ENCODE measurements at regions of chr9 and their contacts with region 1.

Region 1: GRCh38 chr9:17793713-17794622 is 215.1 kb downstream of the SH3GL2 start:
- DNase-seq: peak in 3 of 10 donors; percentile 41 to 83 (median 74)

Region 2: DNA sequence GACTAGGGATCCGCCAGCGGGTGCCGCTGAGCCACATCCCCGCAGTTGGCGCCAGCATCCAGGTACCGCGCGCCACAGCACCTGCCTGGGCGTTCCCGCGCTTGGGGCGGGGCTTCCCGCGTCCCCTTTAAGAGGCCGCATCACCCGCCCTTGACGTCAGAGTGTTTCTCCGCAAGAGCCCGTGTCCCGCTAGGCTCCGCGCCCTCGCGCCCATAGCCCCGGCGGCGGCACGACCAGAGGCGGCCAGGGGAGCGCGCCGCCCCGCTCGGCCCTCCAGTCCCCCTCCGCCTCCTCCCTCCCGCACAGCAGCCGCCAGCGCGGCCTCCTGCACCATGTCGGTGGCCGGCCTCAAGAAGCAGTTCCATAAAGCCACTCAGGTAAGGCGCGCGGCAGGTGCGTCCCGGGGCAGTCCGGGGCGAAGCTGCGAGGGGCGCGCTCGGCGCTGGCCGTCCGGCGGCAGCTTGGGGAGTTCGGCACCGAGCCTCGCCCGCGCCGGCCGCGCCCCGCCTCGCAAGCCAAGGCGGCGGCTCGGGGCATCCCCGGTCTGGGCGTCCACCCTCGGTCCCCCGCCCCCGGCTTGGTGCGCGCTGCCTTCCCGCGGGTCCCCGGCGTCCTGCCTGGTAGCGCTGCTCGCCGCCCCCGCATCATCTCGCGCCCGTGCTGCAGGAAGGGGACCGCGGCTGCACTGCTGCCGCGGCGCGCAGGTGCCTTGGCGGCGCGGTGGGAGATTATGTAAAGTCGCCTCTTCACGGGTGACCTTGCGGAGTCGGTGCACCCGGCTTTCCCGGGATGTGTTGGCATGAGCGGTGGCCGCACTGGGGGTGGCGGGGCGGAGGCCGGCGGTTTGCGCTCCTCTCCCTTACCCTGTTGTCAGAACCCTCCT is 214.8 kb before region 1 on chr9 and contains the start of gene SH3GL2:
- intact Hi-C with region 1: loop called (anchors 10 kb)
- DNase-seq: peak; percentile 34 to 96 (median 77)

Region 3: GRCh38 chr9:17627641-17628040 is 166.3 kb before region 1 on chr9:
- intact Hi-C with region 1: no loop called
- DNase-seq: no peak

Region 4: DNA sequence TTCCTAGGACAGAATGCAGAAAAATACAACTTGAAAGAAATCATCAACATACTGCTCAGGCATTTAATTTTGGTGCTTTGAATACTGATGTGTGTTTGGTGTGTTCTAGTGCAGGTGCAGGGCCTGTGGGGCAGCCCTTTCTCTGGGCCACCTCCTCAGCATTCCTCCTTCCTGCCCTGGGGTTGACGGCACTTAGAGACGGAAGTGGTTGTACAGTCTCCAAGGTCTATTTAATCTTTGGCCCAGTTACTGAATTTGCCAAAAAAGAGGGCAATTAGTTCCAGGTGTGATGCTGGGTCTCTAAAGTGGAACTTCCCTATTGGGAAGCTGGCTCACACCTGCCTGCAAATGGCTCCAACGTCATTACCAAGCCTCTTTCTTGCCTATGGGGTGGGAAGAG is 53.9 kb after region 1 on chr9:
- intact Hi-C with region 1: no loop called
- DNase-seq: no peak

Region 5: DNA sequence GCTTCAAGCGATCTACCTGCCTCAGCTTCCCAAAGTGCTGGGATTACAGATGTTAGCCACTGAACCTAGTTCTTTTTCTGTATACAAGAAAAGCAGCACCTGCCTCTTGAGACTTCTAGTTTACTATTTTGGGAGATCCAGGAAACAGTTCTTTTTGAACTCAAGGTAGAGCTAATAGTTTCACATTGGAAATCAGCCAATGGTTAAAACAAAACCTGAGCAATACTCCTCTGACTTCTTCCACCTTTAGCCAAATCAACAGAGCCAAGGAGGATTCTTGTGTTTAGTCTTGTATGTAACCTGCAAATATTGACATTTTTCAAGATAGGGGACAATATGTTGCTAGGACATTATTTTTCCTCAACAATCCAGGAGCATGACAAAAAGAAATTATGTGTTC is 134.3 kb after region 1 on chr9:
- intact Hi-C with region 1: no loop called
- DNase-seq: no peak

Measured in posterior cingulate gyrus (tissue), 11 donors.